ENCODE measurements at regions of chr10 and their contacts with region 1.

Region 1: DNA sequence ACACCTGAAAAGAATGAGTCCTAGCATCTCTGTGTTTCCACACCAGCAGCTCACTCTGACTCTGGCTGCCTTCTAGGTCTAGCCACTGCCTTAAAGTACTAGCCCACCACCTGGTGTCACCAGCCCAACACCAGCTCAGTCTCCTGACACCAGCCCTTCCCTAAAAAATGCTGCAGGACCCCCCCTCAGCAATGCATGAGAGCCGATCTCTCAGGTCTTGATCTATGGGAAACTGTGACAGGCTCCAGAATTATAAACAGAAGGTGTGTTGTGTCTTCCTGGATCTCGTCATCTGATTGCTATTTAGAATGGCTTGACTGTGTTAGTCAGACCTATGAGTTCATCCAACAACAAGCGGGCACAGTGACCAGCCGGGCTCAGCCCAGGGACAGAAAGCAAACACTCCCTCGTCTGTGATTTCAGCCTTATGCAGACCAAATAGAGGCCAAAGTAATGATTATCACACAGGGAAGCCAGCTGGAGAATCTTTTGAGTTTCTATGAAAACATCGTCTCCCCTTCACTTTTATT is 66.6 kb downstream of the CUBN start:
- DNase-seq: peak; percentile 73 to 88
- H3K4me3 ChIP-seq: peak overlapping the region; percentile 39; the same call in 1 of the 2 replicates
- H3K27ac ChIP-seq: peak overlapping the region; percentile 96
- H3K4me1 ChIP-seq: peaks cover 47% of the 10 kb centered on the region
- H3K27me3 ChIP-seq: no peaks in the 10 kb centered on the region
- CTCF ChIP-seq: no peak

Region 2: DNA sequence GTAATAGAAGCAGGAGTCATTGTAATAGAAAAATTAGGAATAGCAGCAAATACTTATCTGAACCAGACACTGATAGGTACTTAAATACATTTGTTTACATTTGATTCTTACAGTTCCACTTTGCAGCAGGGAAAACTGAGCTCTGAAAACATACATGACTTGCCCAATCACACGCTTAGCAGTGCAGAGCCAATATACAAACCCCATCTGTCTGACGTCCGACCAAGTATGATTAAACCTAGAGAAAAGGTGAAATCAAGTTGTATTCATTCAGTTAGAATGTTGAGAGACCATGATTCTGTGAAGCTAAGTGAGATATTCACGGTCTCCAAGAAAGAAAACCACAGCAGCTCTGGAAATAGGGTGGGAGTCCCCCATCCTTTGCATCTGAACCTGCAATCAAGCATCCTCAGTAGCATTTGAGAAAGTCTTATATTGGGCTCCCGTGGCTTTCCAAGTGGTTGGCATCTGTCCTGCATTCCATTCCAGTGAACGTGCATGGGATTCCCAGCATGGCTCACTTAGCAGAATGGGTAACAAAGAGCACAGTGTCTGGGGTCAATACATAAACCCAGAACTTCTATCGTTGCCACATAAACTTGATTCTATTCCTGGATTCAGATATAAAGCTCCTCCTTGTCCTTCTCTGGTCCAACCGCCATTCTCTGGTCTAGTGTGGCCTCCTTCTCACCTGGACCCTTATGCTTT is 97.1 kb before region 1 on chr10:
- CTCF ChIA-PET with region 1: no interaction called
- POLR2A ChIA-PET with region 1: no interaction called
- intact Hi-C with region 1: loop called (anchors 5 kb)
- DNase-seq: peak; percentile 59 to 73
- H3K4me3 ChIP-seq: no peak overlapping the region
- H3K27ac ChIP-seq: no peak overlapping the region
- H3K4me1 ChIP-seq: peaks cover 12% of the 10 kb centered on the region
- H3K27me3 ChIP-seq: no peaks in the 10 kb centered on the region
- CTCF ChIP-seq: no peak

Region 3: DNA sequence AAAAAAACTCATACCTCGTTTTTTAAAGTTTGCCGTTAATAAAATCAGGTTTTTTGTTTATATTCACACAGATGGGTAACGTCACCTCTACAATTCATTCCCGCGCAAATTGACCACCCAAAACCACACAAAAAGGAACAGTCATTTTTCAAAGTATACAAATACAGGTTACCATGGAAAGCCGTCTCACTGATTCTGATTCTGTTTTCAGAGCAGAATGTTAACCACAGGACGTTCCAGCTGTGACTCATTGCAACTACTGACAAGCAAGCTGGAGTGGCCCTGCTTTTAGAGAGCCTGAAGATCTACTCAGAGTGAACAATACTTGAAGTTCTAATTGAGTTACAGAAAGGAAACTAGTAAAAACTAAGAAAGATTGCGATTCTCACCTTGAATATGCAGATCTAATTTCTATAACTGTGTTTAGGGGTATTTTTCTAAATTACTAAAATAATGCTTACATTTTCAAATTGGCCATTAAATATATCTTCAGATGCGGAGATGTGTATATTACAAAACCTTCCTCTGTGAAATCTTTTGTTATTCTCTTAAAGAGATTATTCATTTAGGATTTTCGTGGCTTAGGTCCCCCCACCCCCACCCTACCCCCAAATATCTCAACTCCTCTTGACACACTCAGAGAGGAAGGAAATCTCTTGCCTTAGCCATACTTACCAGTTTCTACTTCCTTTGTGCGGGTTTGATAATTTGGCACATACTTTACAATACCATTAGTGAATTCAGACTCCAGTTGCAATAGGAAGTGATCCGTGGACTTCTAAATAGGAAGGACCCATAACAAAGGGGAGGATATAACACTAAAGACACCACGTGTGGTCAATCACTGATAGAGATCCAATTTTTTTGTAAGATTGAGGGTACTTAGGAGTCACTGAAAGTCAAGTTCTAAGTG is 39.4 kb before region 1 on chr10:
- CTCF ChIA-PET with region 1: no interaction called
- POLR2A ChIA-PET with region 1: no interaction called
- intact Hi-C with region 1: loop called (anchors 1 kb)
- DNase-seq: peak; percentile 67 to 87
- H3K4me3 ChIP-seq: no peak overlapping the region
- H3K27ac ChIP-seq: no peak overlapping the region
- H3K4me1 ChIP-seq: peaks cover 11% of the 10 kb centered on the region
- H3K27me3 ChIP-seq: no peaks in the 10 kb centered on the region
- CTCF ChIP-seq: no peak

Region 4: DNA sequence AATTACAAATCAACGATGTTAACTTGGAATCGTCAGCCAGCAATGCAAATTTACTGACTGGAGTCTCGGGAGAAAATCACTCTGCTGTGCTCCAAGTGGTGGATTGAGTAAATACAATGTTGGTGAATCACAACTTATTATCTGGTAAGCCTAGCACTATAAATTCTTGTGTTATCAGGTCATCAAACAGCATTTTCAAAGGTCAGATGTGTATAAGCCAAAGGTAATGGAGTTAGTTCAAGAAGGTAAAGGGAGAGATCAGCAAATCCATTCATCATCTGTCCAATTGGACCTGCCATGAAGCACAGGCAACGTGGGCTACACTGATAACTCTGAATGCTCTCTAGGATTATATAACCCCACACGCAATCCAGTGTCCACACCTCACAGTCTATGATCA is 52.7 kb after region 1 on chr10:
- CTCF ChIA-PET with region 1: no interaction called
- POLR2A ChIA-PET with region 1: interaction called, 4 read pairs
- intact Hi-C with region 1: loop called (anchors 1 kb)
- DNase-seq: peak; percentile 16 to 80
- H3K4me3 ChIP-seq: peak overlapping the region; percentile 56
- H3K27ac ChIP-seq: peak overlapping the region; percentile 80
- H3K4me1 ChIP-seq: peaks cover 20% of the 10 kb centered on the region
- H3K27me3 ChIP-seq: no peaks in the 10 kb centered on the region
- CTCF ChIP-seq: no peak; the same call in 1 of the 2 replicates

Region 5: DNA sequence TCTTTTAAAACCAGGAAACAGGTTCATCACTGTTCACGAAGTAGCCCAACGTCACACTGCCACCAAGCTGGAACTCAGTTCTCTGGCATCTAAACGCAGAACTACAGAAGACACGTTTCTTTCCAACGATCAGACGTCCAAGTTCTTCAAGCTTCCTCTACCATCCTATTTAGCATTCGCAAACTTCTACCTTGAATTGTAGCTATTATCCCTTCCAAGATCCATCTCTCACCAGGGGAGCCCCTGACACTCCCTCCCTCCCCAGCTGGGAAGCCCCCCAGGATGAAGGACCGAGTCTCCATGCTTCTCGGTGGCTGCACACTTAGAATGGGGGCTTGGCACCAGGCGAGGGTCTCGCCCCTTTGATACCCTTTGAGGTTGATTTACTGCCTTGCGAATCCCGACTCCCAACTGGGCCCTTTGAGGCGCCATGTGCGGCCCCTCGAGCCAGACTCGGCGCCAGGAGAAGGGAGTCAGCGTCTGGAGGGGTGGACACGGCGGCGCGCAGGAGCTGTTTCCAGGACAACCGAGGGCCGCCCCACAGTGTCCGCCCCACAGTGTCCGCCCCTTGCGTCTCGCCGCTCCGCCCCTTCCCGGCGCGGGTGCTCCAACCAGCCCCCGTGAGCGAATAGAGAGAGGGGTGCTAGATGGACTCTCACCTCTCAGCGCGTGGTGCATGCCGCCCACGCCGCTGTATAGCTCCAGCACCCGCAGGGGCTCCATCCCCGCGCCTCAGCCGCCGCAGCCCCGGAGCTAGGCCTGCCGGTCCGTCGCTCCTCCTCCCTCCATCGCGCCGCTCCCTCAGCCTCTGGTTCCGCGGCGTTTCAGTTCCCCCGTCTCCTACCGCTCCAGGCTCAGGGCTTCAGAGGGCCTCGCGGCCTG is 138.1 kb after region 1 on chr10 and contains the start of gene TRDMT1:
- CTCF ChIA-PET with region 1: interaction called, 3 read pairs
- POLR2A ChIA-PET with region 1: no interaction called
- intact Hi-C with region 1: loop called (anchors 10 kb)
- DNase-seq: peak; percentile 56 to 84
- H3K4me3 ChIP-seq: peak within 1 kb of the TSS; percentile 97
- H3K27ac ChIP-seq: peak within 1 kb of the TSS; percentile 68
- H3K4me1 ChIP-seq: peaks cover 16% of the 10 kb centered on the region
- H3K27me3 ChIP-seq: no peaks in the 10 kb centered on the region
- CTCF ChIP-seq: no peak
- total RNA-seq, gene TRDMT1: 3.2 and 4.2 TPM in 2 replicates

Region 6: DNA sequence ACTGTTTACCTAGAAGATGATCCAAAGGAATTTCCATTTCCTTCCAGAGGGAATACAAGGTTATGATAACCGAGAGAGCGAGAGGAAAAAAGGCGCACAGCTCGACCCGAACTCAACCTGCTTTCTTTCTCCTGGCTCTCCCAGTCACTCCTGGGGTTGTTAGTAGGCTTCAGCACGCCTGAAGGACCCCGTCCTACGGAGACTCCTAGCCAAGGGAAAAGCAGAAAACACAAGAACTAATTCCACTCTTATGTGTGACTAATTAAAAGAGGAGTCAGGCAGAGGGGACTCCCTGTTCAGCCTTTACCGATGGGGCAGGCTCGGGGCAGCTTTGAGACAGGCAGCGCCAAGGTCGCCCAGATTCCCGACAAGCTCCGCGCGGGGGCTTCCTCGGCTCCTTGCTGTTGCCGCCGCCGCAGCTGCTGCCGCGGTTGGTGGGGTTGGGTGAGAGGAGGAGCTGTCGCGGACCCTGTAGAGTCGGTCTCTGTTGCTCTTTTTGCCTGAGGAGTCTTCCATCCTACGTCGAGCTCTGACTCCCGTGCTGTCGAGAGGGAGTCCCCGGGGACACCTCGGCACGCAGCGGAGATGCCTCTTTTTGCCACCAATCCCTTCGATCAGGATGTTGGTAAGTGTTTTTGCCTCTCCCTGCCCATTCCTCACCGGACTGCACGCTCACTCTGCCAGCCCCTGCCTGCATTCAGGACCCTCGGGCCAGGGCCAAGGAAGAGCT is 580.9 kb after region 1 on chr10 and contains the start of gene STAM:
- CTCF ChIA-PET with region 1: no interaction called
- POLR2A ChIA-PET with region 1: no interaction called
- intact Hi-C with region 1: no loop called
- DNase-seq: peak; percentile 76 to 90
- H3K4me3 ChIP-seq: peak within 1 kb of the TSS; percentile 96
- H3K27ac ChIP-seq: peak within 1 kb of the TSS; percentile 91
- H3K4me1 ChIP-seq: peaks cover 30% of the 10 kb centered on the region
- H3K27me3 ChIP-seq: no peaks in the 10 kb centered on the region
- CTCF ChIP-seq: no peak
- total RNA-seq, gene STAM: 37.0 and 38.8 TPM in 2 replicates

Measured in PC-9 (cell line).